ENCODE measurements at regions of chr12 and their contacts with region 1.

Region 1: GRCh38 chr12:89019408-89020120 is 332.7 kb downstream of the DUSP6 start:
- DNase-seq: peak; percentile 69
- H3K4me3 ChIP-seq: peak overlapping the region; percentile 46
- H3K27ac ChIP-seq: no peak overlapping the region
- H3K27me3 ChIP-seq: no peaks in the 10 kb centered on the region
- CTCF ChIP-seq: peak; percentile 98

Region 2: DNA sequence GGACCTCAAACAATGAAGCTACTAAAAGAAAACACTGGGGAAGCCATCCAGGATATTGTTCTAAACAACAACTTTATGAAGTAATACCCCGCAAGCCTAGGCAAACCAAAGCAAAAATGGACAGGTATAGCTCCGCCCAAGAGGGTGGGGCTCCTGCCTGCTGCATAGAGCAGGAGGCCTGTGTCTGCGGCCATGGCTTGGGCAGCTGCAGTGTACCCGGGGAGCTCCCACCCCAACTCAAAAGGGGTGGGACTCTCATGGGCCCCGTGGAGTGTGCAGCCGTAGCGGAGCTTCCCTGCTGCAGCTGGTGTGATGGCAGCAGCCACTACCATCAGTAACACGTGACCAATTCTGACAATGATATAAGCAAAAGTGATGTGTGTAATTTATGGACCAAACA is 175.1 kb before region 1 on chr12:
- CTCF ChIA-PET with region 1: no interaction called
- POLR2A ChIA-PET with region 1: no interaction called
- DNase-seq: no peak
- H3K4me3 ChIP-seq: no peak overlapping the region
- H3K27ac ChIP-seq: no peak overlapping the region
- H3K27me3 ChIP-seq: no peaks in the 10 kb centered on the region
- CTCF ChIP-seq: no peak

Region 3: DNA sequence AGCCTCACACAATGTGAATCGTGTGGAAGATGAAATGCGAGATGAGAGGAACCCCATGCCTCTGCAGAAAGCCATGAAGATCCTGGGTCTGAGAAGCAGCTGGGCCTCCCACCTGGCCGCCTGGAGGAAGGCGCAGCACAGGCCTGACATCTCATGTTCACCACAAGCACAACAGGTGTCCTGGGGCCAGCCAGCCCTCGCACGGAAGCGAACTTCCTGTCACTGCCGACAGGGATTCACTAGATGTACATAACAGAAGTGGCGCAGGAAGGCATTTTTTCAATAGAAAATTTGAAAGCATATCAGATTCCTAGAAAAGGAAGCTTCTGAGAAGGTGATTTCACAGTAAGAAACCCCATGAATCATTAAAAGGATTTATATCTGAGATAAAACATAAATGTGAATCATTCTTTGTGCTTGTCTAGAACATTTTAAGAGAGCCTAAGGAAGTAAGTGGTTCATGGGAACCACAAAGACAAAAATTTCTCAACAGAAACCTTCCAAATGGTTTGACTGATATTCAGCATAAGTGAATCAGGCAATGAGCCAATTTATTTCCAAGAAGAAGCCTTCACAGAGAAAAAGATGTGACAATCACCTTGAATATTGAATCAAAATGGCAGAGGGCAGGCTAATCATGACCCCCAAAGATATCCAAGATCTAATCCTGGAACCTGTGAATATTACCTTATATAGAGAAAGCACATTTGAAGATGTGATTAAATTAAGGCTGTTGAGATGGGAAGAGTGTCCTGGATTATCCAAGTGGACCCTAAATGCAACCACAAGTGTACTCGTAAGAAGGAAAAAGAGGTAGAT is 20.8 kb after region 1 on chr12:
- CTCF ChIA-PET with region 1: interaction called, 16 read pairs
- POLR2A ChIA-PET with region 1: no interaction called
- DNase-seq: no peak
- H3K4me3 ChIP-seq: no peak overlapping the region
- H3K27ac ChIP-seq: no peak overlapping the region
- H3K27me3 ChIP-seq: no peaks in the 10 kb centered on the region
- CTCF ChIP-seq: no peak

Region 4: DNA sequence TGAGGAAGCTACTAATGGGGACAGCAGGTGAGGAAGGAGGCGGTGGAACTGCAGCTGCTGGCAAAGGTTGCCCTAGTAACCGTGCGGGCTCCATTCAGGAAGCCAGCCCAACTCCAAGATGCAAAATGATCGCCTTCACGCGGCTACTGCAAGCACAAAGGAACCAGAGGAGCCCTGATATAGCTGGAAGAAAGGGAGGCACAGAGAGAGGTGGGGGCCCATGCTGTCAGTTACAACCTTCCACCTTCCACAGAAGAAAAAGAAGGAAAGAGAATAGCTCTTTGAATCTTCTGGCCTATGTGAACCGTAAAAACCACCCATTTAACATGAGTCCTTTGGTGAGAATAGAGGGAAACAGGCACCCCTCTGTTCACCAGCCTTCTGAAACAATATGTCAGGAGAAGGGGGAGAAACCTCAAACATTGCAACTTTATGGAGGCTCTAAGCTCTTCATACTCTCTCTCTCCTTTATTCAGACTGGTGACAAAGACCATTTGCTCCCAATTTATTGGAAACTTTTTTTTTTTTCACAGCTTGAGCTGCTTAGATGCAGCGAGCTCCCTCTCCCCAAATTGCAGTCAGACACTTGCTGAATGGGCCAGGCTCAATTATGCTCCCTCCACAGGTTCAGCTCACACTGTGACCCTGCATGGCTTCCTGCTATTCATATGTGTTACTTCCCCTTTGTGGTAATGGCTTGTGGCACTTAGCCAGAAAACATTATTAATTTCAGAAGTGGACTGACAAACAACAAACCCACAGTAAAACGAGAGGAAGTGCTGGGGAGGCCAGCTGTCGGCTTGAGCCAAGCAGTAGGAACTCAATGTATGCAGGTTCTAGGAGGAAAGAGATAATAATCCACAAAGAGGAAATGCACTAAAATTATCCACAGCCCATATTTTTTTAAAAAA is 326.5 kb after region 1 on chr12:
- CTCF ChIA-PET with region 1: interaction called, 36 read pairs
- POLR2A ChIA-PET with region 1: interaction called, 4 read pairs
- DNase-seq: no peak
- H3K4me3 ChIP-seq: no peak overlapping the region
- H3K27ac ChIP-seq: no peak overlapping the region
- H3K27me3 ChIP-seq: no peaks in the 10 kb centered on the region
- CTCF ChIP-seq: no peak

Region 5: GRCh38 chr12:89451841-89452251 is 432.3 kb after region 1 on chr12:
- CTCF ChIA-PET with region 1: interaction called, 12 read pairs
- POLR2A ChIA-PET with region 1: no interaction called
- DNase-seq: peak; percentile 60
- H3K4me3 ChIP-seq: no peak overlapping the region; the same call in 1 of the 2 replicates
- H3K27ac ChIP-seq: peak overlapping the region; percentile 54
- H3K27me3 ChIP-seq: no peaks in the 10 kb centered on the region
- CTCF ChIP-seq: no peak

Region 6: DNA sequence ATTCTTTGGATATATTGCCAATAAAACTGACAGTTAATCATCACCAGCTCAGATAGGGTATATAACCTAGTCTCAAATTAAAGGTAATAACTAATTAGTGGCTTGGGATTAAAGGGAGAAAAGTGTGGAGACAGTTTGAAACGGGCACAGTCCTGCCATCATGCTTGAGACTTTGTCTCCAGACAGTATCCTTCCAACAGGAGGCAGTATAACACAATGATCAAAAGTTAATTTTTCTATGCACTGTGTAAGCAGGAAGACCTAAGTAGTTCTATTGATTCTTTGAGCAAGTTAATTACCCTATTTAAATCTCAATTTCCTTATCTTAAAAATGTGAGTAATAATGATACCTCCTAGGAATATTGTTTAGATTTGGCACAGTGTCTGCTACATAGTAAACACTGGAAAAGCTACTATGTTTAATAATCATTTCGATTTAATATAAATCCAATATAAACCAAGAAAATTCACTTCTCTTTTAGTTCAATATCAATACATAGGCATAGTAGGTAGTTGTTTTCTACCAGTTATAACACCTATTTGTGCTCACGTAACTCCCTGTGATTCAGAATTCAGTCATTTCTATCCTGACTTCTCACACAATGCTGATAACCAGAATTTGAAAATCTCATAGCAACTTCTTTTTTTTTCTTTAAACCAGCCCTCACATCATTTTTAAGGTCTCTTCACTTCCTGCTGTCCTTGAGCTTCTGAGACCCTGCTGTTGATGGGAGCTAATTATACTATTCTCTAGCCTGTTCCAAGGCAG is 451.4 kb after region 1 on chr12:
- CTCF ChIA-PET with region 1: interaction called, 18 read pairs
- POLR2A ChIA-PET with region 1: no interaction called
- DNase-seq: no peak
- H3K4me3 ChIP-seq: no peak overlapping the region
- H3K27ac ChIP-seq: no peak overlapping the region
- H3K27me3 ChIP-seq: no peaks in the 10 kb centered on the region
- CTCF ChIP-seq: peak; percentile 71

Region 7: GRCh38 chr12:89524541-89525285 is 505.1 kb after region 1 on chr12 and contains the start of gene GALNT4:
- CTCF ChIA-PET with region 1: interaction called, 78 read pairs
- POLR2A ChIA-PET with region 1: no interaction called
- DNase-seq: peak; percentile 52
- H3K4me3 ChIP-seq: peak within 1 kb of the TSS; percentile 91
- H3K27ac ChIP-seq: peak within 1 kb of the TSS; percentile 76
- H3K27me3 ChIP-seq: no peaks in the 10 kb centered on the region
- CTCF ChIP-seq: peak; percentile 77
- polyA plus RNA-seq, gene GALNT4: 5.3 and 7.3 TPM in 2 replicates

Region 8: GRCh38 chr12:89566630-89567151 is 547.1 kb after region 1 on chr12:
- CTCF ChIA-PET with region 1: no interaction called
- POLR2A ChIA-PET with region 1: no interaction called
- DNase-seq: no peak
- H3K4me3 ChIP-seq: no peak overlapping the region
- H3K27ac ChIP-seq: no peak overlapping the region
- H3K27me3 ChIP-seq: no peaks in the 10 kb centered on the region
- CTCF ChIP-seq: no peak

Region 9: GRCh38 chr12:89817501-89818226 is 798.1 kb after region 1 on chr12:
- CTCF ChIA-PET with region 1: no interaction called
- POLR2A ChIA-PET with region 1: no interaction called
- DNase-seq: no peak
- H3K4me3 ChIP-seq: no peak overlapping the region
- H3K27ac ChIP-seq: no peak overlapping the region
- H3K27me3 ChIP-seq: no peaks in the 10 kb centered on the region
- CTCF ChIP-seq: no peak

Measured in AG04450 (cell line).